CD4-positive, alpha-beta T cell (primary cell): ENCODE measurements at regions of chr17 and their contacts with region 1.

Region 1: DNA sequence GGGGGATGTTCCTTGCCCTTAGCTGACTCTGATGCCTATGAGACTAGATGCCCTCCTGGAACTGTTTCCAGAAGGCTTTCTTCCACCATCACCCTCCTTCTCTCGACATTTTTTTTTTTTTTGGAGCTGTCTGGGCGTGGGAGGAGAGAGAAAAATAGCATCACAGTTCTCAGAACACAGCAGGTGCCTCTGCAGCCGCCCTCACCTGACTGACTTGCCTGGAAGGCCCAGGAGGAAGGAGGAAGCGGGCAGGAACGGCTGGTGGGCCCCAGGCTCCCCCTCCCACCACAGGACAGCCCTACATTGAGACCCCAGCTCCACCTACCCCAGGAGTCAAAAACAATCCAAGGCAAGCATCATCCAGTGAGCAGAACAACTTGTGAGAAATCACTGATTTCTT is 20.3 kb upstream of the CACNG5 start:
- DNase-seq: no peak
- ATAC-seq: no peak
- H3K4me3 ChIP-seq: no peak overlapping the region
- H3K4me3 Mint-ChIP-seq: no peak overlapping the region
- H3K27ac ChIP-seq: no peak overlapping the region
- H3K27ac Mint-ChIP-seq: no peak overlapping the region
- H3K4me1 ChIP-seq: no peaks in the 10 kb centered on the region
- H3K4me1 Mint-ChIP-seq: no peaks in the 10 kb centered on the region
- H3K27me3 ChIP-seq: peaks cover 0 to 2% of the 10 kb centered on the region in 2 experiments
- H3K27me3 Mint-ChIP-seq: no peaks in the 10 kb centered on the region
- CTCF ChIP-seq: no peak

Region 2: GRCh38 chr17:66755101-66755904 is 59.3 kb before region 1 on chr17:
- CTCF ChIA-PET with region 1: no interaction called
- POLR2A ChIA-PET with region 1: no interaction called
- intact Hi-C with region 1: loop called in 1 of 2 experiments (anchors 10 kb)
- DNase-seq: no peak
- ATAC-seq: no peak
- H3K4me3 ChIP-seq: no peak overlapping the region
- H3K4me3 Mint-ChIP-seq: no peak overlapping the region
- H3K27ac ChIP-seq: no peak overlapping the region
- H3K27ac Mint-ChIP-seq: no peak overlapping the region
- H3K4me1 ChIP-seq: no peaks in the 10 kb centered on the region
- H3K4me1 Mint-ChIP-seq: no peaks in the 10 kb centered on the region
- H3K27me3 ChIP-seq: no peaks in the 10 kb centered on the region
- H3K27me3 Mint-ChIP-seq: no peaks in the 10 kb centered on the region
- CTCF ChIP-seq: no peak